Right ventricle myocardium superior (tissue), 1 donor: ENCODE measurements at regions of chr15 and their contacts with region 1.

Region 1: DNA sequence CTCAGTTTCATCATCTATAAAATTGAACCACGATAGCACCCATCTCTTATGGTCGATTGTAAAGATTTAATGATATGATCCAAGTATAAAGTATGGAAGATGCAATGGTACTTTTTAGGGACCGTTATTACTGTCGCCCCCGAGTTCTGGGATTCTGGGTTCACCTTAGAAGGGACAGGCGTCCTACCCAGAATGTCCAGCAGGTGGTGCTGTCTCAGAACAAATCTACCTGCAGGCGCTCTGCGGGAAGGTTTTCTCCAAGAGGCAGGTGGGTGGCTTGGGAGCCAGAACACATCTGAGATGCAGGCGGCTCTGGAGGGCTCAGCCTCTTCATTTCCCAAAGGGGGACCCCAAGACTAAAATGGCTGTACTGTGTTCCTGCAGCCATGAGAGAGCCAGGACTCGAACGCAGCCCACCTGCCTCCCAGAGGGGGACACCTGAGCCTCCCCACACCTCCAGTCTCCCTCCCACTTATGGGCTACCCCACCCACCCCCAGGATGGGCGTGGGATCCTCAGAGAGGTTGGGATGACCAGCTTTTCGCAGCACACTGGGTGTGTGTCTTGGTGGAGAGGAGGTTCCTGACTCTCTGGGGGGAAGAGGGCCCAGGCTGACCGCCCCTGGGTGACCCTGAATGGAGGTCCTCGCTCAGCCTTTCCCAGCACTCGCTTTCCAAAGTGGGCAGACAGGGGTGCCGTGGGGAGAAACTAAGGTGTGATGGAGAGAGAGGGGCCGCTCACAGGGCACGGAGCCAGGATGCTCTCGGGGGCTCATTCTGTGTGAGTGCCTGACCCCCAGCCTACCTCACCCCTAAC is 28.1 kb upstream of the CORO2B start:
- DNase-seq: peak; percentile 81
- ATAC-seq: peak; percentile 56

Region 2: DNA sequence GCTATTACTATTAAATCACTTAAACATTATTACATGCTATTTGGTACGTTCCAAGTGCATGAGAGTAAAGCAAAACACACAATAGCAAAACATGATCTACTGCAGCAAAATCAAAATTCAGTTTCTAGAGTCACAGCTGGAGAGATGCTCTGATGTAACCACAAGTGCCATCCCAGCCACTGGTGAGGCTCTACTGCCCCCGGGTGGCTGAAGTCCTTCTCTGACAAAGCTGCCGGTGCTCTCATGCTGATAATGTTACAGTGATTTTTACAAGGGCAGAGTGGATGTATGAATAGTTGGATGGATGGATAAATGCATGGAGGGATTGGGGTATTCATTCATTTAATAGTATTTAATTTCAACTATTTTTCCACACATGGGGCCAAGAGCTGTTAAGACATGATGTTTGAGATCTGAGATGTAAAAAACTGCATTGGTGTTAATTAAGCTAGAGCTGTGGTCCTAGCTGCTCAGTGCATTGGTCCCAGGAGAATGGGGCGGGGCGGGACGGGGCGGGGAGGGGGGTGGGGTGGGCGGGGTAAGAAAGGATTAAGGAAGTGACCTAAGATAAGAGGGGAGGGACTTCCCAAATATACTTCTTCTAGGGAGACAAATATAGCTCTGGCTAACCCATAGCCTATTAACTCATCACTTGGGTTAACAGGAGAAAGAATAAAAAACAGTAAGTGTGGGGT is 374.3 kb after region 1 on chr15:
- intact Hi-C with region 1: loop called (anchors 2 kb)
- DNase-seq: peak; percentile 81
- ATAC-seq: peak; percentile 91